HepG2 (cell line): ENCODE measurements at regions of chr10 and their contacts with region 1.

Region 1: DNA sequence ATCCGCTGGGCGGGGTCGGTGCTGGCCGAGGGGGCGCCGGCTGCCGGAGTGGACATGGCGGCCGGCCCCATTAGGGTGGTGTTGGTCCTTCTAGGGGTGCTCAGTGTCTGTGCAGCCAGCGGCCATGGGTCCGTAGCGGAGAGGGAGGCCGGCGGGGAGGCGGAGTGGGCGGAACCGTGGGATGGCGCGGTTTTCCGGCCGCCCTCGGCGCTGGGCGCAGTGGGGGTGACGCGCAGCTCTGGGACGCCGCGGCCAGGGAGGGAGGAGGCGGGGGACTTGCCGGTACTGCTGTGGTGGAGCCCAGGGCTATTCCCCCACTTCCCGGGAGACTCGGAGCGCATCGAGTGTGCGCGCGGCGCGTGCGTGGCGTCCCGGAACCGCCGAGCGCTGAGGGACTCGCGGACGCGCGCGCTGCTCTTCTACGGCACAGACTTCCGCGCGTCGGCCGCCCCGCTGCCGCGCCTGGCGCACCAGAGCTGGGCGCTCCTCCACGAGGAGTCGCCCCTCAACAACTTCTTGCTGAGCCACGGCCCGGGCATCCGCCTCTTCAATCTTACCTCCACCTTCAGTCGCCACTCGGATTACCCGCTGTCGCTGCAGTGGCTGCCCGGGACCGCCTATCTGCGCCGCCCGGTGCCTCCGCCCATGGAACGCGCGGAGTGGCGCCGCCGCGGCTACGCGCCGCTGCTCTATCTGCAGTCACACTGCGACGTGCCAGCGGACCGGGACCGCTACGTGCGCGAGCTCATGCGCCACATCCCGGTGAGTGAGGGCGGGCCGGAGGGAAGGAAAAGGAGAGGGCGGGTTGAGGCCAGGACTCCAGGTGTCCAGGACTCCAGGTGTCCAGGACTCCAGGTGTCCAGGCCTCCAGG is 9.3 kb upstream of the CHCHD1 start:
- DNase-seq: peak; percentile 41
- ATAC-seq: peak; percentile 82
- H3K4me3 ChIP-seq: peak overlapping the region; percentile 68 to 84 (median 77); a peak in 5 of 6 replicates
- H3K27ac ChIP-seq: peak overlapping the region; percentile 77
- H3K4me1 ChIP-seq: peaks cover 22% of the 10 kb centered on the region
- H3K27me3 ChIP-seq: no peaks in the 10 kb centered on the region; a peak in 1 of 5 replicates
- CTCF ChIP-seq: peak; percentile 48
- EP300 ChIP-seq: no peak
- POLR2A ChIP-seq: peak; percentile 33 to 79; a peak in 3 of 4 replicates
- RAD21 ChIP-seq: 0 out of 2 replicates have a peak, but pooled peaks have one; percentile 4

Region 2: GRCh38 chr10:73730153-73730906 is 42.2 kb before region 1 on chr10:
- CTCF ChIA-PET with region 1: no interaction called
- POLR2A ChIA-PET with region 1: interaction called, 11 read pairs
- in situ Hi-C with region 1: no loop called
- intact Hi-C with region 1: no loop called
- DNase-seq: peak; percentile 89
- ATAC-seq: peak; percentile 92
- H3K4me3 ChIP-seq: peak overlapping the region; percentile 88 to 100 (median 96)
- H3K27ac ChIP-seq: peak overlapping the region; percentile 96
- H3K4me1 ChIP-seq: no peaks in the 10 kb centered on the region; the same call in 1 of the 2 replicates
- H3K27me3 ChIP-seq: no peaks in the 10 kb centered on the region; a peak in 1 of 5 replicates
- CTCF ChIP-seq: no peak; the same call in 1 of the 2 replicates
- EP300 ChIP-seq: 0 out of 4 replicates have a peak, but pooled peaks of 1 of the 2 experiments have one; percentile 16
- POLR2A ChIP-seq: peak; percentile 91 to 92
- RAD21 ChIP-seq: peak; percentile 53

Region 3: DNA sequence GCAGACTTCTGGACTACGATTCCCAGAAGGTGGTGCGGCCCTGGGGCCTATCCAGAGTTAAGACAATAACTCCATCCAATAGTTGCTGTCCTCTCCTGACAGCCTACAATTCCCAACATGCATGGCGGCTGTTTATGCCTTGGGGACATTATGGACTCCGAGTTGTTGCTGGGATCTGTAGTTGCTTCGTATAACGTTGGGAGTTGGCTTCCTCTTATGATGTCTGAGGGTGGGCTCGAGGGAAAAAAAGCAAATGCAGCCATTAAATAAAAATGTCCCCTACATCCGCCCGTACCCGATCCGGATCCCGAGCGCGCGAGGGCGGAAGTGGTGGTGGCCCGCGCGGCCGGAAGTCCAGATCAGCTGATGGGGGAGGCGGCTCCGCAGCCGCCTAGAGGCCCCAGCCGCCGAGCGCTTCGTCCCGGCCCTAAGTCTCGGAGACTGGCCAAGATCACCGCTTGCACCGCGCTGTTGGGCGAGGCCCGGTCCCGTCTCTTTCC is 12.8 kb after region 1 on chr10 and contains the start of gene ZSWIM8:
- CTCF ChIA-PET with region 1: no interaction called
- POLR2A ChIA-PET with region 1: interaction called, 31 read pairs
- in situ Hi-C with region 1: no loop called
- intact Hi-C with region 1: no loop called
- DNase-seq: peak; percentile 95
- ATAC-seq: peak; percentile 87
- H3K4me3 ChIP-seq: peak within 1 kb of the TSS; percentile 75 to 95 (median 90)
- H3K27ac ChIP-seq: peak within 1 kb of the TSS; percentile 70
- H3K4me1 ChIP-seq: peaks cover 54% of the 10 kb centered on the region
- H3K27me3 ChIP-seq: no peaks in the 10 kb centered on the region; a peak in 1 of 5 replicates
- CTCF ChIP-seq: no peak
- EP300 ChIP-seq: no peak
- POLR2A ChIP-seq: peak; percentile 61; a peak in 2 of 4 replicates
- RAD21 ChIP-seq: no peak
- total RNA-seq, gene ZSWIM8: 21.0 and 39.9 TPM in 2 replicates

Region 4: DNA sequence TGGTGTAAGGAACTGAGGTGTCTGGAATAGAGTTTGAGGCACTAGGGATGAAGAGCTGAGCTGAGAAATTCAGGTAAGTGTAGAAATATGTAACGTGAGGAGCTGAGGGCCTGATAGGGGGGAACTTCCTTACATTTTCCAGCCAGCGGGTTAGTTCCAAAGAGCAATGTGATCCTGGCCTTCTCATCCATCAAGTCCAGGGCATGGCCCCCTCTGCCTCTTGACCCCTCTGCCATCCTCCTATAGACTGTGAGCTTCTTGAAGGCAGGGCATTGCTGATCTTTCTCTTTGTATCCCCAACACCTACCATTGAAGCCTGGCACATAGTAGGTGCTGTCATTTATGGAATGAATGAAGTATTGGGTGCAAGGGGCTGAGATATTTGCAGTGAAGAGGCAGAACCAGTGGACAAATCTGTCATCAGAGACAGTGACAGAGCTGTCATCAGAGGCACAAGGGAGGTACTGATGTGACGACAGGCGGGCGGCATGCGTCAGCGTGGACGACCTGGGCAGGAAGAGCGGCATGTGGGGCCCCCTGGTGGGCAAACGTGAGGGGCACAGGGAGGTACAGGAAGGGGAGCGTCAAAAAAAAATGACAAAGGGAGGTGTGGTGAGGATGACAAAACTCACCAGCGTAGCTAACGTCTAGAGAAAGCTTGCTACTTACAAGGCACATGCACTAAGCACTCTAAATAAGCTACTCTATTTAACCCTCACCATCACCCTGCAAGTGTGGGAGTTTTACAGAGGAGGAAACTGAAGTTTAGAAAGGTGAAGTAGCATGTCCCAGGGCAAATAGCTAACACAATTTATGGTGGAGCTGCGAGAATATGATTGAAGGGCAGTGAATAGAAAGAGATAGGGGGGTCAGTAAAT is 107.0 kb after region 1 on chr10:
- CTCF ChIA-PET with region 1: no interaction called
- POLR2A ChIA-PET with region 1: no interaction called
- in situ Hi-C with region 1: no loop called
- intact Hi-C with region 1: loop called (anchors 5 kb)
- DNase-seq: peak; percentile 74
- ATAC-seq: peak; percentile 90
- H3K4me3 ChIP-seq: no peak overlapping the region
- H3K27ac ChIP-seq: no peak overlapping the region
- H3K4me1 ChIP-seq: peaks cover 39% of the 10 kb centered on the region
- H3K27me3 ChIP-seq: no peaks in the 10 kb centered on the region; a peak in 2 of 5 replicates
- CTCF ChIP-seq: peak; percentile 96
- EP300 ChIP-seq: no peak
- POLR2A ChIP-seq: no peak
- RAD21 ChIP-seq: peak; percentile 90